Common myeloid progenitor, CD34-positive (primary cell): ENCODE measurements at regions of chr12 and their contacts with region 1.

Region 1: GRCh38 chr12:117119592-117120198 is 20.5 kb upstream of the TESC start:
- DNase-seq: peak in 1 of 3 donors; percentile 49
- H3K4me3 ChIP-seq: no peak overlapping the region
- H3K27ac ChIP-seq: no peak overlapping the region
- H3K4me1 ChIP-seq: peaks cover 0 to 21% (median 5%) of the 10 kb centered on the region in 4 experiments
- H3K27me3 ChIP-seq: no peaks in the 10 kb centered on the region

Region 2: GRCh38 chr12:117032593-117033381 is 86.9 kb before region 1 on chr12:
- CTCF ChIA-PET with region 1: interaction called, 126 read pairs
- POLR2A ChIA-PET with region 1: no interaction called
- DNase-seq: peak in 2 of 3 donors; percentile 62 to 72
- H3K4me3 ChIP-seq: peak overlapping the region in 3 of 7 experiments; percentile 34 to 67 (median 51)
- H3K27ac ChIP-seq: no peak overlapping the region
- H3K4me1 ChIP-seq: peaks cover 0 to 15% (median 11%) of the 10 kb centered on the region in 4 experiments
- H3K27me3 ChIP-seq: peaks cover 0 to 32% (median 3%) of the 10 kb centered on the region in 5 experiments

Region 3: GRCh38 chr12:117134059-117134458 is 14.4 kb after region 1 on chr12:
- CTCF ChIA-PET with region 1: interaction called, 31 read pairs
- POLR2A ChIA-PET with region 1: no interaction called
- DNase-seq: peak; percentile 59 to 88 (median 86)
- H3K4me3 ChIP-seq: peak overlapping the region in 3 of 7 experiments; percentile 39 to 54 (median 41)
- H3K27ac ChIP-seq: peak overlapping the region in 1 of 2 experiments; percentile 6
- H3K4me1 ChIP-seq: peaks cover 4 to 28% (median 17%) of the 10 kb centered on the region in 4 experiments
- H3K27me3 ChIP-seq: no peaks in the 10 kb centered on the region

Region 4: DNA sequence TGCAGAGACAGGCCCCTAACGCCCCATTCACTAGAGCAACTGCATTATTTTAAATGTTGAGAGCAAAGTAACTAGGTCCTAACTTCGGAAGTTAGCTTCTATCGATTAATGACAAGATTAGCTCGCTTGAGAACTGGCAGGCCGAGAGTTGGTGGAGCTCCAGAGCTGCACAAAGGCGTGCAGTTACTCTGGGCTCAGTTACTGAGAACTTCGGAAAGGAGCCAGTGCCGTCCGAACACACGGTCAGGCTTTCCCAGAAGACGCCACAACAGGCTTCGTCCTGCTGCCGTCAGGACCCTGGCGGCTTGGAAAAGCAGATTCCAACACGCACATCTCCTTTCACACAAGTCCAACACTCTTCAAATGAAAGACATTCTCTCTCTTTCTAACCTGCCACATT is 24.9 kb after region 1 on chr12:
- CTCF ChIA-PET with region 1: no interaction called
- POLR2A ChIA-PET with region 1: no interaction called
- DNase-seq: no peak
- H3K4me3 ChIP-seq: no peak overlapping the region
- H3K27ac ChIP-seq: no peak overlapping the region
- H3K4me1 ChIP-seq: no peaks in the 10 kb centered on the region
- H3K27me3 ChIP-seq: no peaks in the 10 kb centered on the region